ENCODE measurements at regions of chr12 and their contacts with region 1.

Region 1: DNA sequence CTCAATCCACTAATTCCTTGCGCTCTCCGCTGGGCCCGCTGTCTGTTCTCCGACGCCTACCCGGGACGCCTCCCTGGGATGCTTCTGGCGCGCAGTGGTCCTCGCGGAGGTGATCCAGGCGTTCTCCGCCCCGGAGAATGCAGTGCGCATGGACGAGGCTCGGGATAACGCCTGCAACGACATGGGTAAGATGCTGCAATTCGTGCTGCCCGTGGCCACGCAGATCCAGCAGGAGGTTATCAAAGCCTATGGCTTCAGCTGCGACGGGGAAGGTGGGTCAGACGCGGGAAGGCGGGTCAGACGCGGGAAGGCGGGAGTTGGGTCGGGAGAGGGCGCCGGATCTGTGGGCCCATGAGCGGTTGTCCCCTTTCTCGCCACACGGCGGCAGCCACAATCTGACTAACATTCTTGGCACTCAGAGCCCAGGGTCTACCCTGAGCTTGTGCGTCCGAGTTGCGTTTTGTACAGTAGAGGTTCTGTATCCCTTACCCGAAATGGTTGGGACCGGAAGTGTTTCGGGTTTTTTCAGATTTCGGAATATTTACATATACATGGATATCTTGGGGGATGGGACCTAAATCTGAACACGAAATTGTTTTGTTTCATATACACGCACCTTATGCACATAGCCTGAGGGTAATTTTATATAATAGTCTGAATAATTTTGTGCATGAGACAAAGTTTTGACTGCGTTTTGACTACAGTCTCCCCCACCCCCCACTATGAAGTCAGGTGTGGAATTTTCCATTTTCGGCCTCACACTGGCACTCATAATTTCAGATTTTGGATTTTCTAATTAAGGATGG is 762 bp downstream of the C12orf57 start:
- DNase-seq: no peak
- H3K4me3 ChIP-seq: peak overlapping the region; percentile 57 to 91 (median 83)
- H3K27ac ChIP-seq: peak overlapping the region; percentile 89
- H3K4me1 ChIP-seq: peaks cover 6 to 20% (median 14%) of the 10 kb centered on the region in 4 experiments
- H3K27me3 ChIP-seq: no peaks in the 10 kb centered on the region
- CTCF ChIP-seq: peak in 2 of 3 experiments; percentile 91 to 98; a peak in 3 of 4 replicates
- EP300 ChIP-seq: peak in 1 of 2 experiments; percentile 42; a peak in 1 of 3 replicates
- POLR2A ChIP-seq: no peak
- RAD21 ChIP-seq: peak; percentile 83 to 89

Region 2: GRCh38 chr12:6736754-6737153 is 207.8 kb before region 1 on chr12:
- CTCF ChIA-PET with region 1: no interaction called
- POLR2A ChIA-PET with region 1: no interaction called
- DNase-seq: no peak
- H3K4me3 ChIP-seq: no peak overlapping the region
- H3K27ac ChIP-seq: no peak overlapping the region
- H3K4me1 ChIP-seq: peaks cover 0 to 5% (median 0%) of the 10 kb centered on the region in 4 experiments; a peak in 1 of 7 replicates
- H3K27me3 ChIP-seq: no peaks in the 10 kb centered on the region
- CTCF ChIP-seq: no peak
- EP300 ChIP-seq: no peak
- POLR2A ChIP-seq: no peak
- RAD21 ChIP-seq: no peak

Region 3: GRCh38 chr12:6833189-6833890 is 111.2 kb before region 1 on chr12:
- CTCF ChIA-PET with region 1: no interaction called
- POLR2A ChIA-PET with region 1: interaction called, 11 read pairs
- DNase-seq: no peak
- H3K4me3 ChIP-seq: no peak overlapping the region
- H3K27ac ChIP-seq: no peak overlapping the region
- H3K4me1 ChIP-seq: peaks cover 0 to 8% (median 4%) of the 10 kb centered on the region in 4 experiments; a peak in 5 of 7 replicates
- H3K27me3 ChIP-seq: no peaks in the 10 kb centered on the region
- CTCF ChIP-seq: no peak
- EP300 ChIP-seq: no peak
- POLR2A ChIP-seq: no peak
- RAD21 ChIP-seq: no peak

Region 4: DNA sequence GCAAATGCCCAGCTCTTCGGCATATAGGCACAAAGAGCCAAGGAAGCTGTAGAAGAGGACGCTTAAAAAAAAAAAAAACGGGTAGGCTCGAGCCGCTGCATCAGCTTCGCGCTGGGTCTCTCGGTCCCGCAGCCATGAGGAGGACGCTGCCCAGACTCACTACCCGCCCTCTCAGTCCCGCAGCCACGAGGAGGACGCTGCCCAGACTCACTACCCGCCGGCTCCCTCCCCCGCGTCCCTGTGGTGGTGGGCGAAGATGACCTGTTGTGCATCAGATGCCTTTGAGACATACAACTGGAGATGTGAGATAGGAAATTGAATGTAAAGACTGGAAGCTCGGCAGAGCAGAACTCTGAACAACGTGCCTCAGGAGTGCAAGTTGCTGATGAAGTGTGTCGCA is 60.0 kb before region 1 on chr12:
- CTCF ChIA-PET with region 1: interaction called, 5 read pairs
- POLR2A ChIA-PET with region 1: interaction called, 20 read pairs
- DNase-seq: no peak
- H3K4me3 ChIP-seq: no peak overlapping the region
- H3K27ac ChIP-seq: no peak overlapping the region
- H3K4me1 ChIP-seq: peaks cover 2 to 10% (median 5%) of the 10 kb centered on the region in 4 experiments; a peak in 5 of 7 replicates
- H3K27me3 ChIP-seq: no peaks in the 10 kb centered on the region
- CTCF ChIP-seq: no peak
- EP300 ChIP-seq: no peak
- POLR2A ChIP-seq: no peak
- RAD21 ChIP-seq: no peak

Region 5: DNA sequence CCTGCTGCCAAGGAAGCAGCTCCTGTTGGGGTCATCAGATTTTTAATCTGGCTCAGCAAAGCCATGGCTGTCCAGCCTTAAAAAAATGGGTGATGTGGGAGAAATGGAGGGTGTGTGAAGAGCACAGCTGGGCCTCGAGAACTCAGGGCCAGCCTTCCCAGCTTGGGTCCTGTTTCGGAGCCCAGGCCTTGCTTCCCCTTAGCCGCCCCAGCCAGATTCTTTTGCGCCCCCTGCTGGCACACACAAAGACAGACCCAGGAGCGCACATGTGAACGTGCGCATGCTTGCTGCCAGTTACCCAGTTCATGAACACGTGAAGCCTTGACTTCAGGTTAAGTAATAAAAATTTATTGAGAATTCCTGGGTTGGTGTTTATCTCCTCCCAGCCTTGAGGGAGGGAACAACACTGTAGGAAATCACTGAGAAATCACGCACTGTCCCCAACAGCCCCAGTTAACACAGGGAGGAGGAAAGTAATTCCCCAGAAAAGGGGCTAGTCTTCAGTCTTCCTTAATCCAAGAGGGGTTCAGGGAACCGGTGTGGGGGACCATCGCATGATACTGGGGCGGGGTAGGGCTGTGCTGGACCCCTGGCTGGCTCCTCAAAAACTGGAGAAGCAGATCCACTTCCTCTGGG is 20.6 kb after region 1 on chr12:
- CTCF ChIA-PET with region 1: interaction called, 277 read pairs
- POLR2A ChIA-PET with region 1: interaction called, 1,596 read pairs
- DNase-seq: peak in 1 of 2 experiments; percentile 88
- H3K4me3 ChIP-seq: peak overlapping the region in 2 of 4 experiments; percentile 23 to 79; a peak in 2 of 8 replicates
- H3K27ac ChIP-seq: peak overlapping the region; percentile 43; the same call in 1 of the 2 replicates
- H3K4me1 ChIP-seq: peaks cover 12 to 50% (median 32%) of the 10 kb centered on the region in 4 experiments
- H3K27me3 ChIP-seq: no peaks in the 10 kb centered on the region
- CTCF ChIP-seq: peak in 2 of 3 experiments; percentile 78 to 90; a peak in 3 of 4 replicates
- EP300 ChIP-seq: no peak
- POLR2A ChIP-seq: peak in 1 of 2 experiments; percentile 46; a peak in 2 of 3 replicates
- RAD21 ChIP-seq: peak; percentile 64 to 72

Region 6: DNA sequence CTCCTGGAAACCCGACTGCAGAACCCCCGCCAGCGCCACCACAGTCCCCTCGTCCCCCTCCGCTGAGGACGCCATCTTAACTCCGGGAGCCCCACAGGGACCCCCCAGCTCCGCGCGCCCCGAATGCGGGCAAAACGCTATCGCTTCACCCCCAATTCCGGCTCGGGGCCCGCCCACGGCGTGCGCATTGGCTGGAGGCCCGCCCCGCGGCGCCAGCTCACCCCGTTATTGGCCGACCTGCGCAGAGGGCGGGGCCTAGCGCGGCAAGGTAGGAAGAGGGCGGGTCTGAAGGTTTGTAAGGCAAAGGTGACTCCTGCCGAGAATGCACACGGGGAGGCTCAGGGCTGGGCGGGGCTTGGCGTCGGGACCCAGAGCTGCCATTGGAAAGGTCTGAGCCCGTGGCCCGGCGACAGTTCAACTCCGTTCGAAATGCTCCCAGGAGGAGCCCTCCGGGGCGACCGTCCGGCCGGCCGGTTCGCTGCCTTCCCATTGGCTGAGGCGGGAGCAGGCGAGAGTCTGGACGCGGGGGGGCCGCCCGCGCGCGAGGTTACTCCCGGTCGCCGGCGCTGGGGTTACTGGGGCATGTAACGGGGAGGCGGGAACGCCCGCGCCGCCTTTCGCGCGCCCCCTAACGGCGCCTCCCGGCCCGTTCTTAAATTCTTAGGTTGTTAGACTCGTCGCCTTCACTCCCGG is 73.9 kb after region 1 on chr12 and contains the start of gene LPCAT3:
- CTCF ChIA-PET with region 1: interaction called, 4 read pairs
- POLR2A ChIA-PET with region 1: interaction called, 27 read pairs
- DNase-seq: peak; percentile 86 to 98
- H3K4me3 ChIP-seq: peak within 1 kb of the TSS; percentile 74 to 91 (median 80)
- H3K27ac ChIP-seq: peak within 1 kb of the TSS; percentile 76; the same call in 1 of the 2 replicates
- H3K4me1 ChIP-seq: peaks cover 0 to 3% (median under 1%) of the 10 kb centered on the region in 4 experiments; a peak in 2 of 7 replicates
- H3K27me3 ChIP-seq: no peaks in the 10 kb centered on the region
- CTCF ChIP-seq: peak; percentile 73 to 84 (median 77)
- EP300 ChIP-seq: peak in 1 of 2 experiments; percentile 66; a peak in 1 of 3 replicates
- POLR2A ChIP-seq: peak; percentile 13 to 37; a peak in 2 of 3 replicates
- RAD21 ChIP-seq: peak; percentile 53 to 64
- total RNA-seq, gene LPCAT3: 55.2 and 55.8 TPM in 2 replicates

Region 7: DNA sequence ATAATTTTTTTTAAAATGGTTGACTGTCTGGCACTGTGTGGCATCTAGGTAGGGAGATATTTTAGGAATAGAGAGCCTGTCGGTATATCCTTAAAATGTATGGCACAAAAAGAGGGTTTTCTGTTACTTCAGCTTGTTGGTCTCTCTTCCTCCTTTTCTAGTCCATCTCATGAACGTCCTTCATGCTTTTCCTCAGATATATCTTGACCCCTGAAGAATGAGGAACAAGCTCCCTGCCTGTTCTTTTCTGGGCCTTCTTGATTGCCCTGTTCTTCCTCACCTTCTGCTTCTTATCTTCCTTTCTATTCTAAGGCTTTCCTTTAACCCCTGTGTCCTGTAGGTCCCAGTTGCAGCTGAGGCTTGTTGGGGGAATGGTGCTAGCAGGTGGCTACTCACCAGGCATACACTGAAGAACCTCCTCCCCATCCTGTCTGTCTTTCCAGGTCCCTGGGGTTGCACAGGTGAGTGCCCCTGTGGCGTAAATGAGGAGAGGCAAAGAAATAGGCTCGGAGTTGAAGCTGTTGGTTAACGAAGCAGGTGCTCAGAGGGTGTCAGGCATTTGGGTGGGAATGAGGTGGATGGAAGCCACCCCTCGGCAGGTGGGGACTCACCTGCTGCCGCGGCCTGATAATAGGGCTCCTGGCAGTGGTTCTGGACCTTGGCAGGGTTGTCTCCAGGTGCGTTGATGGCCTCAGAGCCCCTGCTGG is 154.9 kb after region 1 on chr12:
- CTCF ChIA-PET with region 1: interaction called, 5 read pairs
- POLR2A ChIA-PET with region 1: interaction called, 14 read pairs
- DNase-seq: no peak
- H3K4me3 ChIP-seq: no peak overlapping the region
- H3K27ac ChIP-seq: no peak overlapping the region
- H3K4me1 ChIP-seq: peaks cover 0 to 2% (median 0%) of the 10 kb centered on the region in 4 experiments; a peak in 1 of 7 replicates
- H3K27me3 ChIP-seq: no peaks in the 10 kb centered on the region
- CTCF ChIP-seq: no peak
- EP300 ChIP-seq: no peak
- POLR2A ChIP-seq: no peak
- RAD21 ChIP-seq: no peak

Region 8: GRCh38 chr12:7129872-7130680 is 185.5 kb after region 1 on chr12 and contains the start of gene CLSTN3:
- CTCF ChIA-PET with region 1: interaction called, 3 read pairs
- POLR2A ChIA-PET with region 1: interaction called, 14 read pairs
- DNase-seq: peak in 1 of 2 experiments; percentile 90
- H3K4me3 ChIP-seq: peak within 1 kb of the TSS; percentile 68 to 82 (median 74)
- H3K27ac ChIP-seq: no peak within 1 kb of the TSS; the same call in 1 of the 2 replicates
- H3K4me1 ChIP-seq: peaks cover 0 to 18% (median 7%) of the 10 kb centered on the region in 4 experiments; a peak in 6 of 7 replicates
- H3K27me3 ChIP-seq: peaks cover 0 to 9% (median 5%) of the 10 kb centered on the region in 4 experiments; a peak in 5 of 7 replicates
- CTCF ChIP-seq: no peak
- EP300 ChIP-seq: no peak
- POLR2A ChIP-seq: no peak; a peak in 1 of 3 replicates
- RAD21 ChIP-seq: no peak
- total RNA-seq, gene CLSTN3: 19.9 and 20.4 TPM in 2 replicates

Measured in H1 (cell line).